Lower leg skin (tissue), 4 donors: ENCODE measurements at regions of chr5 and their contacts with region 1.

Region 1: GRCh38 chr5:8478326-8478725 is 609.4 kb downstream of the MTRR start:
- DNase-seq: no peak
- H3K4me3 ChIP-seq: no peak overlapping the region
- CTCF ChIP-seq: no peak
- POLR2A ChIP-seq: no peak

Region 2: DNA sequence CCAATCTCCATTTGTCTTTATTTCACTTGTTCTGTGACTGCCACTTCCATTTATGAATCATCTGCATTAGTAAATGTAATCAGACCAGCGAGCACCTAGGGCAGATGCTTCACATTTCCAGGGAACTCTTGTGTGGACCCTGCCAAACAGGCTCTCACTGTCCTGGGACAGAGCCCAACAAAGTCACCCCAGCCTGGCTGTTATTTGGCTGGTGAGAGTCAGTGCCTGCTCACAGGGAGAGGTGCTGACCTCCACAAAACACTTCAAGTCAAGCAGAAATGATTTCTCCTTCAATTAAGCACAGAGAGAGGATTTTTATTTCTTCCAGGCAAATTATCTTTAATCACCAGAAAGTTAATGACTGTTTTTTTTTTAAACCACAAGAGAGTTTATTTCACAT is 41.4 kb before region 1 on chr5:
- intact Hi-C with region 1: loop called (anchors 2 kb)
- DNase-seq: no peak
- H3K4me3 ChIP-seq: no peak overlapping the region
- CTCF ChIP-seq: no peak
- POLR2A ChIP-seq: no peak